ENCODE measurements at regions of chr1 and their contacts with region 1.

Region 1: GRCh38 chr1:11248155-11248554 is 14.2 kb downstream of the MTOR start:
- DNase-seq: no peak
- H3K4me3 ChIP-seq: no peak overlapping the region
- H3K27ac ChIP-seq: no peak overlapping the region
- H3K4me1 ChIP-seq: no peaks in the 10 kb centered on the region
- H3K27me3 ChIP-seq: no peaks in the 10 kb centered on the region

Region 2: DNA sequence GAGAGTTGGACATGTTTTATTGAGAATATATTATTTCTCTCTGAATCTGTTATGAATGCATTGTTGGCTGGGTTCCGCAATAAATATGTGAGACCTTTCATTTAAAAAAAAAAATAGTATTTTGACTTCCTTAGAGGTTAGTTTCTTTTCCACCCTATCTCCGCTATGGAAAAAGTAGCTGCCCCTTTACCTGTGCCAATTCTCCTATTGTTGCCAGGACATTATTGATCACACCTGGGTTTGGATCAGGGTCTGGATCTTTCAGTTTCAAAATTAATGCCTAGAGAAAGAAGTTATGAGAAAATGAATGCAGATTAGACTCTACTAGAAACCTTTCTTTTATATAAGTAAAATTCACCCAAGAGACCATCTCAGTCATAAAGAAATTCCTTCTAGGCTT is 14.9 kb before region 1 on chr1:
- CTCF ChIA-PET with region 1: no interaction called
- POLR2A ChIA-PET with region 1: no interaction called
- DNase-seq: no peak
- H3K4me3 ChIP-seq: no peak overlapping the region
- H3K27ac ChIP-seq: no peak overlapping the region
- H3K4me1 ChIP-seq: peaks cover 0 to 21% (median 18%) of the 10 kb centered on the region in 4 experiments
- H3K27me3 ChIP-seq: no peaks in the 10 kb centered on the region

Region 3: DNA sequence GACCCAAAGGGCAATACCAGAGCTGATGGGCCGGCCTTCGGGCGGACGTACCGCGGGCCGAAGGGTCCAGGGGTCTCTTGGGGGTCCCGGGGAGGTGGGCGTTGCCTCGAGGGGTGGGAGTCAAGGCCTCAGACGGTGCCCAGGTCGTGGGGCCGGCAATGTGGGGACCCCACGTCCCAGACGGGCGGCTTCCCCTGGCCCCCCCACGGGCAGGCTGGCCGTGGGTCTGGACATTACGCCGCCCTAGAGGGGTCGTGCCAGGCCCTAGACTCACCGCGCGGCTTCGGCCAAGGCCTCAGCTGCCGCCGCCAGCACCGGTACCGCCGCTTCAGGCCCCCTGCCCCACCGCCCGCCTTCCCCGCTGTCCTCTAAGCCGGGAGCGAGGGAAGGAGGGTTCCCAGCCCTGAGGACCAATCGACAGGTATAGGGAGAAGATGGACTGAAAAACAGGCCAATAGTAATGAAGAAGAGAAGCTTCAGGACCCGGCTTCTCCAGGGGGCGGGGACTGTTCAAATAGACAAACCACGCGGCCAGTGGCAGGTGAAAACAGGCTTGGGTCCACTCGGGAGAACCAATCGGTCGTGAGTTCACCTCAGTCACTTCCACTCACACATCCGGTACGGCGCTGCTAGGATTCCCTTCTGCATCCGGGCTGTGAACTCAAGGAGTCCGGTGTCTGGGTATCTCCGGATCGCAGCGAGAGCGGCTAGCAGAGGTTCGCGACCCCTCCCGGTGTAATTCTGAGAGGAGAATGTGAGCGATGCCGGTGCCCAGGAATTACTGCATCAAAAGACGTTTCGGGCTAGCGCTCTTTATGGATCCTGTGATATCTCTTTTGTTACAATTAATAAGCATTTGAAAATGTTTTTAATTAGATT is 14.3 kb after region 1 on chr1 and contains the start of gene MTOR:
- CTCF ChIA-PET with region 1: interaction called, 30 read pairs
- POLR2A ChIA-PET with region 1: no interaction called
- DNase-seq: peak; percentile 100
- H3K4me3 ChIP-seq: peak within 1 kb of the TSS; percentile 72 to 95 (median 92)
- H3K27ac ChIP-seq: peak within 1 kb of the TSS; percentile 84 to 93
- H3K4me1 ChIP-seq: peaks cover 3 to 14% (median 9%) of the 10 kb centered on the region in 4 experiments
- H3K27me3 ChIP-seq: no peaks in the 10 kb centered on the region

Region 4: DNA sequence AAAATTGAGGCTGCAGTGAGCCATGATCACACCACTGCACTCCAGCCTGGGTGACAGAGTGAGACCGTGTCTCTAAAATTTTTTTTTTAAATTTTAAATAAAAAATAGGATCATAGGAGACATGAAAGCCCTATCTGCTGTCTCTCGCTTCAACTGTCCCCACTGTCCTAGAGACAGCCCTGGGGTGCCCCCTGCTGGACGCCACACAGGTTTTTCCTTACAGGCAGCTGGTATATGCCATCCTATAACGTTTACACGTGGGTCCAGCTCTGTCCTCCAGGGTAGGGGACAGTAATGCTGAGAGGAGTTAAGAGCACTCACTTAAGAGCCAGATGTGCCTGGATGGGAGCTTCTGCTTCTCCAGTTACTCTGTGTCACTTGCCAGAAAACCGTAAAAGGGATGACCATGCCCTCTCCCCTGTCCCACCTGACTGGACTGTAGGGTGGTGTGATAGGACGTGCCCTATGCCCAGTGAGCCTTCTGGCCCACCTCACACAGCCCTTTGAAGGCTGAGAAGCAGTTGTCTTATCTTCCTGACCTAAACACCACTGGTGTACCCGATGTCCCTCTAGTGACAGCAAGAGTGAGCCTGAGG is 397.6 kb after region 1 on chr1:
- CTCF ChIA-PET with region 1: interaction called, 20 read pairs
- POLR2A ChIA-PET with region 1: no interaction called
- DNase-seq: peak; percentile 74 to 90 (median 84)
- H3K4me3 ChIP-seq: no peak overlapping the region
- H3K27ac ChIP-seq: no peak overlapping the region
- H3K4me1 ChIP-seq: peaks cover 0 to 14% (median 9%) of the 10 kb centered on the region in 4 experiments
- H3K27me3 ChIP-seq: peaks cover 0 to 32% (median 11%) of the 10 kb centered on the region in 5 experiments

Measured in common myeloid progenitor, CD34-positive (primary cell).